ENCODE measurements at regions of chr1 and their contacts with region 1.

Region 1: GRCh38 chr1:33007190-33008050 is 29.3 kb downstream of the AK2 start:
- DNase-seq: peak; percentile 61
- ATAC-seq: peak; percentile 83
- H3K4me3 ChIP-seq: no peak overlapping the region
- H3K27ac ChIP-seq: no peak overlapping the region
- H3K4me1 ChIP-seq: peaks cover 15% of the 10 kb centered on the region; the same call in 1 of the 2 replicates
- H3K27me3 ChIP-seq: no peaks in the 10 kb centered on the region
- CTCF ChIP-seq: peak; percentile 41; the same call in 1 of the 2 replicates
- EP300 ChIP-seq: no peak
- POLR2A ChIP-seq: no peak
- RAD21 ChIP-seq: no peak

Region 2: DNA sequence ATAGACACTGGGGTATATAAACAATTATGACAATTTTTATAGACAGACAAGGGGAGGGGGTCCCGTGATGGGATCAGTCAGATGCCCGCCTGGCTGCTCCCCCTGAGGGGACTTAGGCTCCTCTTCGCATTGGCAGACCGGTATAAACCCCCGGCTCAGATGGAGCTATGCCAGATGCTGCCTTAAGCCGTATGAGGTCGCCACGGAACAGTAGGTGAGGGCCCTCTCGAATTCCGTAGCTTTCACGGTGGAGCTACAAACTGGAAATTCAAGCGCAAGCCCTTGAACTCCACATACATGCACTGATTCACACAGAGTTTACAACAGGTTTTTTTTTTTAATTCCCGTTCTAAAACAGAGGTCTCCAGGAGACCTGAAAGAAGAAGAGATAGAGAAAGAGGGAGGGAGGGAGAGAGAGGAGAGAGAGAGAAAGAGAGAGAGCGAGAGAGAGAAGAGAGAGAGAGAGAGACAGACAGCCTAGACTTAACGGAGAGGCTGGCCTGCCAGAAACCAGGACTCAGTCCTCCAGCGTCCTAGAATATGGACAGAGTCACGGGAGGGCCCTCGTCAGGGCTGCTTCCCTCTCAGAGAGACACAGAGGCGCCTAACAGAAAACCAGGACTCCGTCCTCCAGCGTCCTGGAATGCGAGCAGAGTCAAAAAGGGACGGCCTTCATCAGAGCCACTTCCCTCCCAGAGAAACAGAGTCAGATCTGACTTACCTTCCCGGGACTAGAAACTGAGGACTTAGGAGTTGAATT is 81.8 kb before region 1 on chr1:
- CTCF ChIA-PET with region 1: no interaction called
- POLR2A ChIA-PET with region 1: no interaction called
- in situ Hi-C with region 1: loop called (anchors 5 kb)
- intact Hi-C with region 1: no loop called
- DNase-seq: peak; percentile 56
- ATAC-seq: peak; percentile 90
- H3K4me3 ChIP-seq: peak overlapping the region; percentile 59 to 75 (median 62)
- H3K27ac ChIP-seq: no peak overlapping the region
- H3K4me1 ChIP-seq: peaks cover 21% of the 10 kb centered on the region
- H3K27me3 ChIP-seq: peaks cover 2 to 34% of the 10 kb centered on the region in 2 experiments; a peak in 3 of 5 replicates
- CTCF ChIP-seq: peak; percentile 57
- EP300 ChIP-seq: no peak
- POLR2A ChIP-seq: no peak
- RAD21 ChIP-seq: no peak

Region 3: GRCh38 chr1:33055210-33056008 is 48.0 kb after region 1 on chr1:
- CTCF ChIA-PET with region 1: no interaction called
- POLR2A ChIA-PET with region 1: no interaction called
- in situ Hi-C with region 1: no loop called
- intact Hi-C with region 1: loop called (anchors 10 kb)
- DNase-seq: peak; percentile 88
- ATAC-seq: peak; percentile 87
- H3K4me3 ChIP-seq: peak overlapping the region in 1 of 3 experiments; percentile 51; a peak in 1 of 6 replicates
- H3K27ac ChIP-seq: no peak overlapping the region
- H3K4me1 ChIP-seq: peaks cover 43% of the 10 kb centered on the region
- H3K27me3 ChIP-seq: no peaks in the 10 kb centered on the region
- CTCF ChIP-seq: peak; percentile 83
- EP300 ChIP-seq: no peak
- POLR2A ChIP-seq: no peak
- RAD21 ChIP-seq: peak; percentile 78

Measured in HepG2 (cell line).